Gastrocnemius medialis (tissue), 4 donors: ENCODE measurements at regions of chr18 and their contacts with region 1.

Region 1: DNA sequence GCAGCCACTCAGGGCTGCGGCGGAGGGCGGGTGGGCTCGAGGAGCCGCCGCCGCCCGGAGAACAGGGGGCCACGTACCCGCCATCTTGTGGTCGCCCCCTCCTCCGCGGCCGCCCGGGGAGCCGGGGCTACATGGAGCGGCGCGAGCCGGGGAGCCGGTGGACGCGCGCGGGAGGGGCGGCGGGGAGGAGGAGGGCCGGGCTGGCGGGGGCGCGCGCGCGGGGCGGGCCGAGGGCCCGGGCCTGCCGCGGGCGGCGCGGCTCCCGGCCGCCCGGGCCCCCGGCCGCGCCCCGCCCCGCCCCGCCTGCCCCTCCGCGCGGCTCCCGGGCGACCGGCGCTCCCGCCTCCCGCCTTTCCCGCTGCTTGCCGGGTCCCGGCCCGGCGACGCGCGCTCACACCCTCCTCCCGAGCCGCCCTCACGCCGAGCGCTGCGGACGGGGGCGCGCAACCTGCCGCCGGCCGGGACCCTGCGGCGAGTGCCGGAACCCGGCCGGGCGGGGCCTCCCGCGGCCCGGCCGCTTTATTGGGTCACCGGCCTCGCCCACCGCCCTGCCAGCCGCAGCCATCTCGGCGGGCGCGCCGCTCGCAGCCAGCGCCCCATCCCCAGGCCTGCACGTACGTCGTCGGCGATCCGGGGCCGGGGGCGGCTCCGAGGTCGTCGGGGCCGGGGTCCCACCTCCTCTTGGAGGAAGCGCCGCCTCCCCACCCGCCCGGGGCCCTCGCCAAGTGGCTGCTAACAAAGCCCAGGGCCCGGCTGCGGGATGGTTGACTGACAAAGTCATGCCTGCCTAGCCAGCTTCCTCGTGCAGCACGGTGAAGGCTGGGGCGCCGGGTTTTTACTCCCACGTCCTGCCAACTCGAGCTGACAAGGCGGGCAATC is at the start of gene PPP4R1:
- DNase-seq: peak; percentile 58 to 72
- ATAC-seq: peak; percentile 85 to 87
- H3K4me3 ChIP-seq: peak within 1 kb of the TSS; percentile 66 to 86 (median 76)
- H3K27ac ChIP-seq: peak within 1 kb of the TSS; percentile 84 to 91 (median 88)
- H3K4me1 ChIP-seq: peaks cover 17 to 20% of the 10 kb centered on the region in 2 donors
- H3K27me3 ChIP-seq: no peaks in the 10 kb centered on the region
- CTCF ChIP-seq: no peak
- POLR2A ChIP-seq: peak; percentile 31 to 47
- total RNA-seq, gene PPP4R1: 27.7 to 48.3 (median 32.0) TPM

Region 2: DNA sequence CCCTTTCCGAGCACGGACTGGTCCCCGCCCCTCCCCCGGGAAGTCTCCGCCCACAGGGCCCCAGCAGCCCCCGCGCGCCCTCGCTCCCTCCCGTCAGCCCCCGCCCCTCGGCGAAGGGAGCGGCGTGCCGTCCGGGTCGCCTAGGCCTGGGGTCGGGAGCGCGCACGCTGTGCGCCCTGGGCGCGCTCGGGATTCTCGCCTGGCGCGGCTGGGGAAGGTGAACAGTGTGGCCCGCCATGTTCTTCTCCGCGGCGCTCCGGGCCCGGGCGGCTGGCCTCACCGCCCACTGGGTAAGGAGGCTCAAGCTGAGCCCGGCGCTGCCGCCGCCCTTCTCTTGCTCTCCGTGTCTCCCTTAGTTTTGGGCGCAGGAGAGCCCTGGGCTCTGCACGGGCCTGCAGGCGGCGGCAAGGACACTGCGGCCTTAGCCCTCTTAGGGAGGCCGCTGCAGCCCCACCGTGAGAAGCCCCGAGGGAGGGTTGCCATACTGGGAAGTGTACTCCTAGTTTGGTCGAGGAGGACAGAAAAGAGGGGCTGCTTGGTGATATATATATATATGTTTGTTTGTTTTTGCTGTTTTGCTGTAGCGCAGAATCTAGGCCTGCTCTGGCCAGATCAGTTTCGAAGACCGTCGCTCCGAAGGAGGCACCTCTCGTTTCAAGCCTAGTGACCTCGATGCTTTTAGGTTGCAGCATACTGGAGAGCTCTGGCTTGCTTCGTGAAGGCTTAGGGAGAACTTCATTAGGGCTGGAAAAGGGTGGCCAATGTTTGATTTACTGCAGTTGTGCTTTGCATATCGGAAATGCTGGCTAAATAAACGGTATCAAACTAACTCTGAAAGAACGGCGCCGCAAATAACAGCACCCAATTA is 511.9 kb before region 1 on chr18 and contains the start of gene NDUFV2:
- in situ Hi-C with region 1: no loop called
- intact Hi-C with region 1: loop called (anchors 1 kb)
- DNase-seq: peak; percentile 95 to 96
- ATAC-seq: peak; percentile 89 to 93
- H3K4me3 ChIP-seq: peak within 1 kb of the TSS; percentile 73 to 89 (median 82)
- H3K27ac ChIP-seq: peak within 1 kb of the TSS; percentile 93 to 98 (median 96)
- H3K4me1 ChIP-seq: peaks cover 42 to 47% of the 10 kb centered on the region in 2 donors
- H3K27me3 ChIP-seq: no peaks in the 10 kb centered on the region
- CTCF ChIP-seq: no peak
- POLR2A ChIP-seq: peak; percentile 92
- total RNA-seq, gene NDUFV2: 251 to 386 (median 277) TPM

Region 3: GRCh38 chr18:9575558-9575957 is 39.1 kb before region 1 on chr18:
- in situ Hi-C with region 1: no loop called
- intact Hi-C with region 1: loop called (anchors 2 kb)
- DNase-seq: peak; percentile 68 to 73
- ATAC-seq: peak; percentile 100
- H3K4me3 ChIP-seq: no peak overlapping the region
- H3K27ac ChIP-seq: peak overlapping the region in 1 of 4 donors; percentile 25
- H3K4me1 ChIP-seq: peaks cover 5 to 9% of the 10 kb centered on the region in 2 donors
- H3K27me3 ChIP-seq: no peaks in the 10 kb centered on the region
- CTCF ChIP-seq: peak; percentile 73 to 85 (median 81)
- POLR2A ChIP-seq: no peak

Region 4: DNA sequence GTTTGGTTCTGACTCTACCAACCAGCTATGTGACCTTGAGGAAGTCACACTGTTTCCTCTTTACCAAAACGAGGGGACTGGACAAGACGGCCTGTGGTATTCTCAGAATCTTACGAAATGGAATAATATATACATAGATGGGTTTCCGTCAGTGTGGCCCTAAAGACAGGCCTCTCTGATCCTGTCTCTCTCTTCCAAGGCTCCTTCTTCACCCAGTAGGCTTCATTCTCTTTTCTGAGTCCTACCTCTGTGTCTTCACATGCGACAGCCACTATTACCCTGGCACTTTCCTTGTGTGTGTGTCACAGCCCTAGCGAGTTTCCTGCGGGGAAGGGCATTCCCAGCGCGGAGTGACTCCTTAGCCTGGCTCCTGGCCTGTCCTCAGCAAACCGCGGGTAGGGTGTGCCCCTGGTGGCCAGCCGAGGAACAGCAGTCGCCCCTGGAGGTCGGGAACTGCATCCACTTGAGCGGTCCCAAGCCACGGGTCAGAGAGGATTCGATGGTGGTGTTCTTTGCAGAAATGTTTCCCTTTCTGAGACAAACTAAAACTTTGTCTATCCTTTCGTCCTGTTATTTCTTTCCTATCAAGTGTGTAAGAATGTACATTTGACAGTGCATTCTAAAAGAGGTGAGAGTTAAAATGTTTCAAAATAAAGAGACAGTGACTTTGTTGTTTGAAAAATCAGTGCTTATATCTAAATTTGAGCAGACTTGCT is 156.8 kb after region 1 on chr18:
- in situ Hi-C with region 1: no loop called
- intact Hi-C with region 1: loop called (anchors 1 kb)
- DNase-seq: peak; percentile 57 to 73
- ATAC-seq: peak; percentile 82 to 94
- H3K4me3 ChIP-seq: no peak overlapping the region
- H3K27ac ChIP-seq: peak overlapping the region in 1 of 4 donors; percentile 1
- H3K4me1 ChIP-seq: no peaks in the 10 kb centered on the region
- H3K27me3 ChIP-seq: no peaks in the 10 kb centered on the region
- CTCF ChIP-seq: peak; percentile 84 to 96 (median 89)
- POLR2A ChIP-seq: no peak

Region 5: GRCh38 chr18:10525371-10526210 is 911.0 kb after region 1 on chr18 and contains the start of gene NAPG:
- in situ Hi-C with region 1: no loop called
- intact Hi-C with region 1: loop called (anchors 5 kb)
- DNase-seq: peak; percentile 74 to 85
- ATAC-seq: peak; percentile 90 to 93
- H3K4me3 ChIP-seq: peak within 1 kb of the TSS; percentile 73 to 99 (median 83)
- H3K27ac ChIP-seq: peak within 1 kb of the TSS; percentile 85 to 96 (median 89)
- H3K4me1 ChIP-seq: peaks cover 12 to 17% of the 10 kb centered on the region in 2 donors
- H3K27me3 ChIP-seq: no peaks in the 10 kb centered on the region
- CTCF ChIP-seq: no peak
- POLR2A ChIP-seq: peak; percentile 32 to 38
- total RNA-seq, gene NAPG: 13.8 to 29.6 (median 19.5) TPM